GM10248 (cell line): ENCODE measurements at regions of chr2 and their contacts with region 1.

Region 1: GRCh38 chr2:24971536-24972314 is at the start of gene DNAJC27:
- DNase-seq: peak; percentile 98
- CTCF ChIP-seq: no peak

Region 2: GRCh38 chr2:24993406-24994145 is 21.9 kb after region 1 on chr2:
- CTCF ChIA-PET with region 1: interaction called, 15 read pairs
- POLR2A ChIA-PET with region 1: no interaction called
- DNase-seq: no peak
- CTCF ChIP-seq: no peak

Region 3: GRCh38 chr2:25026011-25026530 is 54.3 kb after region 1 on chr2:
- CTCF ChIA-PET with region 1: no interaction called
- POLR2A ChIA-PET with region 1: no interaction called
- DNase-seq: no peak
- CTCF ChIP-seq: no peak

Region 4: GRCh38 chr2:25071966-25072365 is 100.2 kb after region 1 on chr2:
- CTCF ChIA-PET with region 1: no interaction called
- POLR2A ChIA-PET with region 1: no interaction called
- DNase-seq: no peak
- CTCF ChIP-seq: no peak

Region 5: GRCh38 chr2:25115902-25116301 is 144.2 kb after region 1 on chr2:
- CTCF ChIA-PET with region 1: interaction called, 12 read pairs
- POLR2A ChIA-PET with region 1: no interaction called
- DNase-seq: no peak
- CTCF ChIP-seq: no peak

Region 6: DNA sequence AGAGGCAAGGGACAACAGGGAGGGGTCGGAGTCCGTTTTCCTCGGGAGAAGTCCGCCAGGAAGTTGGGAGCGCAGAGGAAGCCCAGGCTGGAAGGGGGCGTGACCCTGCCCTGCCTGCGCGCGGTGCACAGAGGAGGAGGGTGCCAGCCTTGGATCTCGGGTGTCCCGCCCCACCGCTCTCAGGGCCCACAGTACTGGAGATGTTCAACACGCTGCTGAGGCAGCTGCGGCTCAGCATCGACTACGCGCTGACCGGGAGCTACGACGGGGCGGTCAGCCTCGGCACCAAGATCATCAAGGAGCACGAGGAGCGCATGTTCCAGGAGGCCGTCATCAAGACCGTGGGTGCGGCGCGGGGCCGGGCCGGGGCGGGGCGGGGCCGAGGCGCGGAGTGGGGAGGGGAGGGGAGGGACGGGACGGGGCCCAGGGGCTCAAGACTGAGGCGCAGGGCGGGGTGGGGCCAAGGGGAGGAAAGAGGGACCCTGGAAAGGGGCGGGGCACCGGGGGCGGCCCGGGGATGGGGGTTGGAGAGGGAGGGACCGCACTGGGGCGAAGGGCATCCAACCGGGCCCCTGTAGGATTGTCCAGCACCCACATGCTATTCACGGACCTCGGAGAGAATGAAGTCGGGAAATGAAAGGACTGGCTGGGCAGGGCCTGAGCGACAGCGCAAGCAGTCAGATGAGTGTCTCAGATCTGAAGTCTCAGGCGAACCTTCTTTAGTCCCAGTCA is 160.0 kb after region 1 on chr2:
- CTCF ChIA-PET with region 1: interaction called, 129 read pairs
- POLR2A ChIA-PET with region 1: no interaction called
- DNase-seq: no peak
- CTCF ChIP-seq: no peak